ENCODE measurements at regions of chr19 and their contacts with region 1.

Region 1: DNA sequence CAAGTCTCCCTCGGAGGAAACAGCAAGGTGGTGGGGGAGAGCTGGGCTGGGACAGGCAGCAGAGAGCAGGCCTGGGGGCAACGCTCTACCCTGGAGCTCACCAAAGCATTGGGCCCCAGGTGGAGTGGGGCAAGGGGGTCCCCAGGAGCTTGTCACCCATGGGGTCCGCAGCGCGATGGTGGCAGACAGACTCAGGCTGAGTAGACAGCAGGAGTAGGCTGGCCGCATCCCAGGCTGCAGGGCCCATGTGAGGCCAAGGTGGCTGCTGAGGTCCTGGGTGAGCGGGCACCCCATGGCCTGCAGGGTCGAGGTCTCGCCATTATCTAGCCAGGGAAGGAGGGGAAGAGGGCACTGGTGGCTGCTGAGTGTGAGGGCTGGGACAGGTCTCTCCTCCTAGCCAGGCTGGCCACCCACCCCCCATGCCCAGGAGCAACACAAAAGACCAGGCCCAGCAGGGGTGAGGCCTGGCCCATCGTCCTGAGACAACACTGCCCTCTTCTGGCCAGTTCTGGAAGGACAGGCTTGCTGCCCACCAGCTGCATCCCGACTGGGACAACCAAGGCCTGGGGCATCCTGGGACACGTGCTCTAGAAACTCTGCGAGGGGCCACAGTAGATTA is 33.1 kb downstream of the CEBPG start:
- DNase-seq: peak; percentile 68 to 88
- ATAC-seq: peak; percentile 71 to 89 (median 85)
- H3K4me3 ChIP-seq: no peak overlapping the region
- H3K27ac ChIP-seq: no peak overlapping the region
- H3K4me1 ChIP-seq: peaks cover 3% of the 10 kb centered on the region
- H3K27me3 ChIP-seq: no peaks in the 10 kb centered on the region
- CTCF ChIP-seq: peak; percentile 98

Region 2: GRCh38 chr19:33143897-33144405 is 262.7 kb before region 1 on chr19:
- intact Hi-C with region 1: loop called in 1 of 2 experiments (anchors 5 kb)
- DNase-seq: peak; percentile 64 to 80
- ATAC-seq: peak; percentile 94 to 99 (median 96)
- H3K4me3 ChIP-seq: no peak overlapping the region
- H3K27ac ChIP-seq: no peak overlapping the region
- H3K4me1 ChIP-seq: no peaks in the 10 kb centered on the region
- H3K27me3 ChIP-seq: no peaks in the 10 kb centered on the region
- CTCF ChIP-seq: peak; percentile 90

Region 3: GRCh38 chr19:33235269-33235995 is 171.2 kb before region 1 on chr19:
- intact Hi-C with region 1: loop called (anchors 1 to 2 kb)
- DNase-seq: peak; percentile 76 to 87
- ATAC-seq: peak; percentile 78 to 86 (median 79)
- H3K4me3 ChIP-seq: no peak overlapping the region
- H3K27ac ChIP-seq: no peak overlapping the region
- H3K4me1 ChIP-seq: no peaks in the 10 kb centered on the region
- H3K27me3 ChIP-seq: peaks cover 0 to 14% (median 0%) of the 10 kb centered on the region in 3 donors
- CTCF ChIP-seq: peak; percentile 93

Region 4: GRCh38 chr19:33241530-33242101 is 165.0 kb before region 1 on chr19:
- intact Hi-C with region 1: loop called in 1 of 2 experiments (anchors 1 kb)
- DNase-seq: peak in 1 of 2 donors; percentile 60
- ATAC-seq: peak; percentile 49 to 89 (median 62)
- H3K4me3 ChIP-seq: no peak overlapping the region
- H3K27ac ChIP-seq: no peak overlapping the region
- H3K4me1 ChIP-seq: no peaks in the 10 kb centered on the region
- H3K27me3 ChIP-seq: no peaks in the 10 kb centered on the region
- CTCF ChIP-seq: peak; percentile 81

Region 5: DNA sequence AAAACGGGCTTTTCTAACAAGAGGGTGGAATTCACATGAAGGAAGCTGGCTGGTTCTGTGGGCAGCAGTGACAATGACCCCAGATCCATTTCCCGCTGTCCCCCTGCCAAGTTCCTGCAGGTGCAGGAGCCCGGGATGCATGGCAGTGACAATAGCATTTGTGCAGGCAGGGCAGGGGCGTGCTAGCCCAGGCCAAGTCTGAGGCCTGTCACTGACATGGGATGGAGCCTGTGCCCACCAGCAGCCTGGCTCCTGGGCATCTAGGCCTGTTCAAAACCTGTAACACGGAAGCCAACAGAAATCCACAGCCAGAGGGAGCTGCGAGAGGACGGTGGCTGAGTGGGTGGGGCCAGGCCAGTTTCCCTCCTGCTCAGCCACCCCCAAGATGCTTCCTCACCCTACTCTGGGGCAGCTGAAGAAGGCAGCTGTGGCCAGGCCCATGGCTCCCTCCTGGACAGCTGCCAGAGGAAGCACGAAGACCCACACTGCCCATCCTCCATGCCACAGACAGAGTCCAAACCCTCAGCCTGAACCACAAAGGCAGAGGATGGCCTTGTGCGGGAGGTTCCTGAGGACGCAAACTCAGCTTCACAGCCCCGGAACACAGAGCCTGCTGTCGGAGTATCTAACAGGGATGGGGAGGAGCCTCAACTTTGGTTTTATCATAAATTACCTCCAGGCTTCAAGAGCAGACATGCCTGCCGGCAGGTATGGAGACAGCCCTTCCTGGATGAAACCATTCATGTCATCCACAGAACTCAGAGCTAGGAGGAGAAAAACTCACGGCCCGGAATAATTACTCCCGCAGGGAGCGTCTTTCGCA is 40.9 kb after region 1 on chr19:
- intact Hi-C with region 1: no loop called
- DNase-seq: peak in 1 of 2 donors; percentile 38
- ATAC-seq: no peak
- H3K4me3 ChIP-seq: no peak overlapping the region
- H3K27ac ChIP-seq: no peak overlapping the region
- H3K4me1 ChIP-seq: no peaks in the 10 kb centered on the region
- H3K27me3 ChIP-seq: no peaks in the 10 kb centered on the region
- CTCF ChIP-seq: no peak

Region 6: DNA sequence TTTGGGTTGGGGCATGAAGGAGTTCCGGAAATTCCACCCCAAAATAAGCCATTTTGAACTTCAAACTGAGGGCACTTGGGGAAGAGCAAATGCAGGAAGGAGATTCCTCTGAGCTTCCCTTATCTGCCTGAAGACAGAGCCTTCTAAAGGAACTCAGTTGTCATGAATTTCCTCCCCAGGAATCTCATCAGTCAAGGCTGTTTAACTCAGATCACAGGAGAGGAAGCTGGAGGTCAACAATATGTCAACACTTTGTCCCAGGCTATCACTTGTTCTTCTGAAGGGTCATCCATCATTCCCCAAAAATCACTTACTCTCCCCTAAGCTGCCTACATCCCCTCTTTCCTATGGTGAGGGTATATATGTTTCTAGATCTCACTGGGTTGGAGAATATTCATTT is 189.2 kb after region 1 on chr19:
- intact Hi-C with region 1: no loop called
- DNase-seq: no peak
- ATAC-seq: no peak
- H3K4me3 ChIP-seq: no peak overlapping the region
- H3K27ac ChIP-seq: no peak overlapping the region
- H3K4me1 ChIP-seq: no peaks in the 10 kb centered on the region
- H3K27me3 ChIP-seq: peaks cover 0 to 4% (median 3%) of the 10 kb centered on the region in 3 donors
- CTCF ChIP-seq: no peak

Measured in psoas muscle (tissue), 8 donors.